Prostate gland (tissue), 2 donors: ENCODE measurements at regions of chr2 and their contacts with region 1.

Region 1: GRCh38 chr2:48530033-48530804 is at the start of gene STON1:
- DNase-seq: peak; percentile 71
- H3K4me3 ChIP-seq: peak within 1 kb of the TSS; percentile 93 to 97
- H3K27ac ChIP-seq: peak within 1 kb of the TSS; percentile 95 to 96
- H3K4me1 ChIP-seq: no peaks in the 10 kb centered on the region
- H3K27me3 ChIP-seq: no peaks in the 10 kb centered on the region
- CTCF ChIP-seq: peak in 2 of 4 experiments; percentile 17 to 27
- POLR2A ChIP-seq: peak; percentile 59
- total RNA-seq, gene STON1: 34.0 to 48.7 TPM

Region 2: DNA sequence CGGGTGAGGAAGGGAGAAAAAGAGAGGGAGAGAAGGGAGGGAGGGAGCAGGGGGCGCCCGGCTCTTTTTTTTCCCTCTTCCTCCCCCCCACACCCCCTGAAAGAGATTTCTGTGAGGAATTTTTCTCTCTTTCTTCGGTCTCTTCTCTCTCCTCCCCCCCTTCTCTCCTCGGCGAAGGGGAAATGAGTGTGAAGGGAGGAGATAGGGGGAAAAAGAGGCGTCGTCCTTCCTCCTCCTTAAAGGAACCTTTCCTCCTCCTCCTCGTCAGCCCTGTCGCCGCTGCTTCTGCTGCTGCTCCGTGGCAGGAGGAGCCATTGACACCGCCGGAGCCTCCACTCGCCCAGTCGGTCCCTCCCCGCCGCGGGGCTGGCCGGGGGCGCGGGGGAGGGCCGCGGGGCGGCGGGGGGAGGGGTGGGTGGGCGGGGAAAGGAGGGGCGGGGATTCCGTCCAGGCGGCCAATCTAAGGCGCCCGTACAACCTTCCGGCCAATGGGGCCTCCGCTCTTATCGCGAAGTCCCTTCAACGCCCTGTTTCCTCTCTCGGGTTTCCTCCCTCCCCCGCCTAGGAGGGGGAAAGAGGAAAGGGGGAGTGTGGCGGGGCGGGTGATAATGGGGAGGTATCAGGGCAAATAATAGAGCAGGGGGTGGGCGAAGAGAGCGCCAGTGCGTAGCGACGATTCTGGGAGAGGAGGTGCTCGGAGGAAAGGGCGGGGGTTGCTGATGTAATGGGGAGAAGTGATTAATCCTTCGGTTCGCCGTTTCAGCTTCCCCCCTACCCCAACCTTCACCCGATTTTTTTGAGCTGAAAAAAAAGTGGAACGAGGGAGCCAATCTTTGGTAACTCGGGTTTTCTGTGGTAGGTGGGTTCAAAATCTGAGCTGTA is 623.8 kb before region 1 on chr2 and contains the start of gene FBXO11:
- intact Hi-C with region 1: no loop called
- DNase-seq: peak; percentile 95
- H3K4me3 ChIP-seq: peak within 1 kb of the TSS; percentile 69 to 82
- H3K27ac ChIP-seq: peak within 1 kb of the TSS; percentile 98 to 99
- H3K4me1 ChIP-seq: no peaks in the 10 kb centered on the region
- H3K27me3 ChIP-seq: no peaks in the 10 kb centered on the region
- CTCF ChIP-seq: peak in 2 of 4 experiments; percentile 21 to 60
- POLR2A ChIP-seq: peak; percentile 85
- total RNA-seq, gene FBXO11: 48.4 to 54.2 TPM

Region 3: GRCh38 chr2:48227617-48228344 is 302.4 kb before region 1 on chr2:
- intact Hi-C with region 1: no loop called
- DNase-seq: no peak
- H3K4me3 ChIP-seq: no peak overlapping the region
- H3K27ac ChIP-seq: no peak overlapping the region
- H3K4me1 ChIP-seq: no peaks in the 10 kb centered on the region
- H3K27me3 ChIP-seq: no peaks in the 10 kb centered on the region
- CTCF ChIP-seq: no peak
- POLR2A ChIP-seq: no peak

Region 4: DNA sequence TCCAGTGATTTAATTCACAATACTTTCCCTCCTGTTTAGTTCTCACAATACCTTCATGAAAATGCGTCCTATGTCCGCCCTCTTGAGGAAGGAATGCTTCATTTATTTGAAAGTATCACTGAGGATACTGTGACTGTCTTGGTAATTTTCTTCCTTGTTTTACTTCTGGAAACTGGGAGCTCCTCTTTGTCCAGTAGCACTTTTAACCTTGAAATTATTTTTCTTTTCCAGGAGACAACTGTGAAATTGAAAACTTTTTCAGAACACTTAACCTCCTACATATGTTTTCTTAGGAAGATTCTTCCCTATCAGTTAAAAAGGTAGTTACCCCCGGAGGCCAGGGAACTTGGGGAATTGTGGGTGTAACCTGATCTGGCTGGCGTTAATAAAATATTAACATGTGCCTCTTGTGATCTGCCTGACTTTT is 59.2 kb before region 1 on chr2:
- intact Hi-C with region 1: loop called (anchors 5 kb)
- DNase-seq: peak; percentile 68
- H3K4me3 ChIP-seq: no peak overlapping the region
- H3K27ac ChIP-seq: peak overlapping the region; percentile 29 to 64
- H3K4me1 ChIP-seq: no peaks in the 10 kb centered on the region
- H3K27me3 ChIP-seq: no peaks in the 10 kb centered on the region
- CTCF ChIP-seq: peak; percentile 43 to 88 (median 75)
- POLR2A ChIP-seq: no peak

Region 5: DNA sequence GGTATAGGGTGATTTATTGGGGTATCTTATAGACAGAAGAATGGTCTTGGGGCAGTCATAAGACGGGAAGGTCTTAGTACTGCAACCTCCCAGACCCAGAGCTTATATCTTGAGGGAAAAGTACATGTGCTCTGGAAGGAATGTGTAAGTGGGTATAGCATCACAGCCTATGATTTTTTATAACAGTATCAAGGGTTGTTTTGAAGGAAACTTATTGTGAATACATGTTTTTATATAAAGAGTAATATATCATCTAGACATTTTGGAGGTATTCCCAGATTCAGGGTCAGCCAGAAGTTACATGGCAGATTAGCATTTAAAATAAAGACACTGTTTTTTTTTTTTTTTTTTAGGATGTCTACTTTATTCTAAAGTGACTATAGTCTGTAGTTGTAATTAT is 47.9 kb before region 1 on chr2:
- intact Hi-C with region 1: loop called (anchors 5 kb)
- DNase-seq: no peak
- H3K4me3 ChIP-seq: no peak overlapping the region
- H3K27ac ChIP-seq: peak overlapping the region; percentile 30 to 55
- H3K4me1 ChIP-seq: no peaks in the 10 kb centered on the region
- H3K27me3 ChIP-seq: no peaks in the 10 kb centered on the region
- CTCF ChIP-seq: no peak
- POLR2A ChIP-seq: no peak

Region 6: DNA sequence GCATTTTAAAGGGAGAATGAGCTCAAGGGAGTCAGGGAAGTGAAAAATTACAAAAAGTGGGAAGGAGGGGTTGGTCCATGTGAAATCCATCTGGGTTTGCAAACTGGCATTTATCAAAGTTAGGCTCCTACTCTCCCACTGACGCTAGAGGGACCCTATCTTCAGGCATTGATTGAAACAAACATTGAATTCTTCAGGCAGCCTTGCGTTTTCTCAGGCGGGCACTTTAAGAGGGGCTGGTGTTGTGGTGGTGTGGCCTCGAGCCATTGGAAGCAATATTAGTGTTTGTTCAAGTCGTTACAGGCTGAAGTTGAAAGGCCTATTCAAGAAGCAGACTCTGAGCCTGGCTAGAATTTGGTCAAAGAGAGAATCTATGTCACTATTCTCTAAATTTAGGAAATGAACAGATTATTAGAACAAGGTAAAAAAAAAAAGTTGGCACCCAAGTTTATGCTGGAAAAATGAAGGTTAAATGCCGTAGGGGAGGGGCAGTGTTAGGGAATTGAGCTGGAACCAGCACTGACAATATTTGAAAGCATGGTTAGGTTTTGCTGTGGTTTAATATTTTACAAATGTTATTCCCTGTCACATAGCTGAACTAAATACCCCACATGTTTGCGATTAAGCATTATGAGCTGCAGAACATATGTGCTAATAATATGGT is 36.5 kb after region 1 on chr2:
- intact Hi-C with region 1: no loop called
- DNase-seq: no peak
- H3K4me3 ChIP-seq: no peak overlapping the region
- H3K27ac ChIP-seq: peak overlapping the region in 1 of 2 donors; percentile 16
- H3K4me1 ChIP-seq: no peaks in the 10 kb centered on the region
- H3K27me3 ChIP-seq: no peaks in the 10 kb centered on the region
- CTCF ChIP-seq: peak in 2 of 4 experiments; percentile 8 to 17
- POLR2A ChIP-seq: no peak

Region 7: DNA sequence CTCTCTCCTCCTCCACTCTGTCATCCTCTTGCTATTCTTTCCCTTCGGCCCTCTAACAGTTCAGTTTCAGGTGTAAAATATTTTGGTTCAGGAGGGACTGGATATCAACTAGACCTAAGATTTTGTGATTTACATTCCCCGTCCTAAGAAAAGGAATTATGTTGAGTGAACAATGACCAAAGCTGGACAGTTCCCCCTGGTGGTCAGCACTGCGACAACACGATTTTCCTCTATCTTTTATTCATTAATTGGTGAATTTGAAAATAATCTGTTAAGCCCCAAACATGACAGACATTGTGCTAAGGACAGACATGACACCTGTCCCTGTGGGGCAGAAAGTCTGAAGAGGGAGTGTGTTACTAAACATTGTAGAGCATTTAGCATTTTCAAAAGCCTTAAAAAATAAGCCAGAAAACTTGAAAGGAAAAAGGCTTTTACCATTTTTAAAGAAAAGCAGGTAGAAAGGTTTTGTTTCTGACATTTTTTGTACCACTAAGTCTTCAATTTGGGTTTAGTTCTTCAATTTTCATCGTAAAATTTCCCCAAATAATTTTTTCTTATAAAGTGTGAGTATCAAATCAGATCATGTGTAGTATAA is 59.0 kb after region 1 on chr2:
- intact Hi-C with region 1: loop called (anchors 5 kb)
- DNase-seq: no peak
- H3K4me3 ChIP-seq: no peak overlapping the region
- H3K27ac ChIP-seq: no peak overlapping the region
- H3K4me1 ChIP-seq: no peaks in the 10 kb centered on the region
- H3K27me3 ChIP-seq: no peaks in the 10 kb centered on the region
- CTCF ChIP-seq: peak; percentile 59 to 77 (median 68)
- POLR2A ChIP-seq: no peak